HEK293T (cell line): ENCODE measurements at regions of chr2 and their contacts with region 1.

Region 1: DNA sequence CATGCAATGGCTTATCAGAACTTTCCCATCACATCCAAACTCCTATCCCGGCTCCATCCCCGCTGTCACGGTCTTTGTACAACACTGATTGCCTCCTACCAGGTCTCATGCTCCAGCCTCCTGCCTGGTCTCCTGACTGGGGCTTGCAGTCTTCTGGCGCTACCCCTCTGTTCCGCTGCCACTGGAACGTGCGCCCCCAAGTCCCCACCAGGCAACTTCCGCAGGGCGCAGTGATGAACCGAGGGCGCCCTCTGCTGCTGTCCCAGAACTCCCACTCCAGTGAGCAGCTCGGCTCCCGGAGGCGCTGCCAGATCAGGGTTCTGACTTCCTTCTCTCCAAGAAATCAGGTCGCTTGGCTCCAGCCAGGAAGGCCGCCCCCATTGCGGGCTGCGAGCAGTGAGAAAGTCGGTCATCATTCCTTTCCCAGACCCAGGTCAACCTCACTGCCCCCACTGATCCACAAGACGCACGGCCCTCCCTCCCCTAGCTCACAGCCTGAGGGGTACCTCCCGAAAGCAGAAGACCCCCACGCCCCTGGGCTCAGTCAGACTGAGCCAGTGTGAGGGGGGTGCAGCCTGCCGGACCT is 43.9 kb upstream of the RAB11FIP5 start:
- DNase-seq: peak; percentile 76

Region 2: DNA sequence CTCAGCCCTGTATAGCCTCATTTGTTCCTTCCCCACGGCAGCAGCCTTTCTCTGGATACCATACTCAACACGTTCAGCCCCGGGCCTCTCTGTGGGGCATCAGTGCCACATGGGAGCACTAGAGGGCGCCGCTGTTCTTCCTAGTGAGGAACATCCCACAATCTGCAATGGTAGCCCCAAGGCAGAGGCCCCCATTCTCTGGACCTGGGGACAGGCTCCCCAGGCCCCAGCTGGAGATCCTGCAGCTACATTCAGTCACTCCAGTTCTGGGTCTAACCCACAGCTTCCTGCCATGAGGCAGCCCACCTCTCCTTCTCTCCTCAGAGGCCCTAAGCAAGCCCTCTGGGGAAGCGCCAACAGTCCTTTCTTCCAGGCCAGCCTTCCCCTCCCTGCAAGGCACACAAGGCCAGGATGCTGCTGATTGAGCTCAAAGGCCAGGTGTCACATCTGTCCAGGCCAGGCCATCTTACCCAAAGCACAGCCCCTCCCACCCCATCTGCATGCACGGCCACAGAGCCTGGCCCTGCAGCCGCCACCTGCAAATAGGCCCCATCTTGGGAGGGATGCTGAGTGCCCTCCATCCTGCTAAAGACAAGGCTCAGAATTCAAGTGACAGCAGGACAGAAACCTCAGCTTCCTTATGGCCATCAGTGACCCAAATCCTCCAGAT is 70.8 kb before region 1 on chr2:
- CTCF ChIA-PET with region 1: interaction called, 37 read pairs
- POLR2A ChIA-PET with region 1: no interaction called
- DNase-seq: peak; percentile 75

Region 3: DNA sequence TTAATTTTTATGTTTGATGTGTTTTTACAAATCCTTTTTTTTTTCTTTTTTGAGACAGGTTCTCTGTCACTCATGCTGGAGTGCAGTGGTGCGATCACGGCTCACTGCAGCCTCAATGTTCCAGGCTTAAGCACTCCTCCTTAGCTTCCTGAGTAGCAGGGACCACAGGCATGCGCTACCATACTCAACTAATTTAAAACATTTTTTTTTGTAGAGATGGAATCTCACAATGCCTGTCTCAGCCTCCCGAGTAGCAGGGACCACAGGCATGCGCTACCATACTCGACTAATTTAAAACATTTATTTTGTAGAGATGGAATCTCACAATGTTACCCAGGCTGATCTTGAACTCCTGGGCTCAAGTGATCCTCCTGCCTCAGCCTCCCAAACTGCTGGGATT is 49.0 kb after region 1 on chr2:
- CTCF ChIA-PET with region 1: no interaction called
- POLR2A ChIA-PET with region 1: no interaction called
- DNase-seq: no peak